Naive thymus-derived CD4-positive, alpha-beta T cell (primary cell): ENCODE measurements at regions of chr11 and their contacts with region 1.

Region 1: GRCh38 chr11:128552783-128553661 is 34.3 kb downstream of the ETS1 start:
- DNase-seq: no peak
- ATAC-seq: peak; percentile 77
- H3K4me3 ChIP-seq: no peak overlapping the region
- H3K4me3 Mint-ChIP-seq: peak overlapping the region in 9 of 10 donors; percentile 1 to 50 (median 23)
- H3K27ac ChIP-seq: peak overlapping the region; percentile 20
- H3K27ac Mint-ChIP-seq: peak overlapping the region; percentile 27 to 99 (median 90)
- H3K4me1 ChIP-seq: peaks cover 36 to 39% of the 10 kb centered on the region in 2 donors
- H3K4me1 Mint-ChIP-seq: peaks cover 32 to 69% (median 62%) of the 10 kb centered on the region in 7 donors
- H3K27me3 ChIP-seq: no peaks in the 10 kb centered on the region
- H3K27me3 Mint-ChIP-seq: no peaks in the 10 kb centered on the region

Region 2: GRCh38 chr11:128532572-128533091 is 20.4 kb before region 1 on chr11:
- CTCF ChIA-PET with region 1: interaction called, 12 read pairs
- POLR2A ChIA-PET with region 1: interaction called, 380 read pairs
- intact Hi-C with region 1: loop called in 1 of 2 experiments (anchors 1 kb)
- DNase-seq: no peak
- ATAC-seq: no peak
- H3K4me3 ChIP-seq: no peak overlapping the region
- H3K4me3 Mint-ChIP-seq: no peak overlapping the region
- H3K27ac ChIP-seq: no peak overlapping the region
- H3K27ac Mint-ChIP-seq: peak overlapping the region in 3 of 9 donors; percentile 9 to 75 (median 18)
- H3K4me1 ChIP-seq: peaks cover 19 to 27% of the 10 kb centered on the region in 2 donors
- H3K4me1 Mint-ChIP-seq: peaks cover 29 to 74% (median 47%) of the 10 kb centered on the region in 7 donors
- H3K27me3 ChIP-seq: no peaks in the 10 kb centered on the region
- H3K27me3 Mint-ChIP-seq: peaks cover 0 to 12% (median 0%) of the 10 kb centered on the region in 5 donors

Region 3: DNA sequence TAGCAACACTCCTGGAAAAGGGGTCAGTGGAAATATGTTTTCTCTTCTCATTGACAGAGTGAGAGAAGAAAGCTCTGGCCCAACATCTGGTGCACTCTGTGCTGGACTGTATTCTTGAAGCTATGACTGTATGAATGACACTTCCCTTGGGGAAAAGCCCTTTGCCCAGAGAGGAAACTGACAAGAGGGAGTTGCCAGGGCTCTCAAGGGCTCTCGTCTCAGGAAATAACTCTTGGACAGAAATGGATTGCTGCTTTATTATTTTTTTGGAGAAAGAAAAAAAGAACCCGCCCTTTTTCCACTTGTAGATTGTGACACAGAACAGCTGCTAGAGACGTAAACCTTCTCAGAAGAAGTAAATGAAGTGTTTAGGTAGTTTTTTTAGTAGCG is 22.9 kb after region 1 on chr11:
- CTCF ChIA-PET with region 1: no interaction called
- POLR2A ChIA-PET with region 1: interaction called, 4 read pairs
- intact Hi-C with region 1: loop called in 1 of 2 experiments (anchors 2 kb)
- DNase-seq: no peak
- ATAC-seq: peak; percentile 66
- H3K4me3 ChIP-seq: no peak overlapping the region
- H3K4me3 Mint-ChIP-seq: peak overlapping the region in 1 of 10 donors; percentile 34
- H3K27ac ChIP-seq: no peak overlapping the region
- H3K27ac Mint-ChIP-seq: no peak overlapping the region
- H3K4me1 ChIP-seq: peaks cover 0 to 23% of the 10 kb centered on the region in 2 donors
- H3K4me1 Mint-ChIP-seq: peaks cover 24 to 56% (median 41%) of the 10 kb centered on the region in 7 donors
- H3K27me3 ChIP-seq: no peaks in the 10 kb centered on the region
- H3K27me3 Mint-ChIP-seq: no peaks in the 10 kb centered on the region

Region 4: DNA sequence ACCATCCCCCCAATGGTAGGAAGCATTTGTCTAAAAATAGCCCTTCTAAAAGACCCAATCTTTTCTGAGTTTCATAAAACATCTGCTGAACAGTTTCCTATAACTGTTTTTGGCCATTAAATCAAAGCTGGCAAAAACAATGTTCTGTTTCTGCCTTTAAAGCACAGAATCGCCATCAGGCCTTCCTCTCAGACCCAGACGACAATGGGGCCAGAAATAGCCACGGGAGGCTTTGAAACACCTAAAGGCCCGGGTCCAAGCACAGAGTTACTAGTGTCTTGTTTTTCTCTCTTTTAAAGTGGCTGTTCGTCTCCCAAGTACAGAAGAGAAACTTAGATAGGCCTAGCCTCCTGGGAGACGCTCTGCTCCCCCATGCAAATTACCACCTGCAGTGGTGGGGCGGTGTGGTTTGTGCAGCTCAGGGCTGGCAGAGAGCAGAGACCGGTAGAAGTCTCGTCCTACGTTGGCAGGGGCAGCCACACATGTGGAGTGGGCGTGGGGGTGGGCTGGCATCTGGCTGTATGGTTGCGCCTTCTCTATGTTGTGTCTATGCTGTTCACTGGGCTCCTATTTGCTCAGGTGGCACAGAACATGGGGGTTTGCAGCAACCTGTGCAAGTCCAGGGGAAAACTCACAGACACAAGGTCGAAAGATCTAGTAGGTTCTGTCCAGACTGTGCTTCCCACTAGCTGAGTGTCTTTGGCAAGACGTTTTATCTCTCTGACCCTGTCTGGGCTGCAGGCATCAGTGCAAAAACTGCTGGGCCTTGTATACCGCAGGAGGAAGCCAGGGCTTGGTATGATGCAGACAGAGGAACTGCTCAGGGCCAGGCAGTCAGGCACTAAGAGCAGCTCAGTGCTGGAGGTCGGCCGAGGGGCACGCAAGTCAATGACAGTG is 57.9 kb after region 1 on chr11:
- CTCF ChIA-PET with region 1: no interaction called
- POLR2A ChIA-PET with region 1: interaction called, 7 read pairs
- intact Hi-C with region 1: loop called in 1 of 2 experiments (anchors 2 kb)
- DNase-seq: peak; percentile 34 to 76 (median 62)
- ATAC-seq: peak; percentile 91
- H3K4me3 ChIP-seq: peak overlapping the region; percentile 11
- H3K4me3 Mint-ChIP-seq: peak overlapping the region; percentile 57 to 85 (median 76)
- H3K27ac ChIP-seq: peak overlapping the region; percentile 76
- H3K27ac Mint-ChIP-seq: peak overlapping the region; percentile 87 to 99 (median 95)
- H3K4me1 ChIP-seq: peaks cover 21 to 58% of the 10 kb centered on the region in 2 donors
- H3K4me1 Mint-ChIP-seq: peaks cover 31 to 88% (median 76%) of the 10 kb centered on the region in 7 donors
- H3K27me3 ChIP-seq: no peaks in the 10 kb centered on the region
- H3K27me3 Mint-ChIP-seq: no peaks in the 10 kb centered on the region